Gastrocnemius medialis (tissue), 4 donors: ENCODE measurements at regions of chr18 and their contacts with region 1.

Region 1: GRCh38 chr18:3605954-3606443 is 156.0 kb downstream of the TGIF1 start:
- DNase-seq: no peak
- ATAC-seq: peak in 1 of 2 donors; percentile 12
- H3K4me3 ChIP-seq: peak overlapping the region; percentile 12 to 57 (median 47)
- H3K27ac ChIP-seq: peak overlapping the region; percentile 64 to 86 (median 82)
- H3K4me1 ChIP-seq: peaks cover 21 to 39% of the 10 kb centered on the region in 2 donors
- H3K27me3 ChIP-seq: peaks cover 0 to 31% (median 21%) of the 10 kb centered on the region in 3 donors
- CTCF ChIP-seq: no peak
- POLR2A ChIP-seq: no peak

Region 2: GRCh38 chr18:3511922-3512372 is 94.1 kb before region 1 on chr18:
- in situ Hi-C with region 1: no loop called
- intact Hi-C with region 1: no loop called
- DNase-seq: no peak
- ATAC-seq: no peak
- H3K4me3 ChIP-seq: no peak overlapping the region
- H3K27ac ChIP-seq: no peak overlapping the region
- H3K4me1 ChIP-seq: no peaks in the 10 kb centered on the region
- H3K27me3 ChIP-seq: no peaks in the 10 kb centered on the region
- CTCF ChIP-seq: no peak
- POLR2A ChIP-seq: no peak

Region 3: DNA sequence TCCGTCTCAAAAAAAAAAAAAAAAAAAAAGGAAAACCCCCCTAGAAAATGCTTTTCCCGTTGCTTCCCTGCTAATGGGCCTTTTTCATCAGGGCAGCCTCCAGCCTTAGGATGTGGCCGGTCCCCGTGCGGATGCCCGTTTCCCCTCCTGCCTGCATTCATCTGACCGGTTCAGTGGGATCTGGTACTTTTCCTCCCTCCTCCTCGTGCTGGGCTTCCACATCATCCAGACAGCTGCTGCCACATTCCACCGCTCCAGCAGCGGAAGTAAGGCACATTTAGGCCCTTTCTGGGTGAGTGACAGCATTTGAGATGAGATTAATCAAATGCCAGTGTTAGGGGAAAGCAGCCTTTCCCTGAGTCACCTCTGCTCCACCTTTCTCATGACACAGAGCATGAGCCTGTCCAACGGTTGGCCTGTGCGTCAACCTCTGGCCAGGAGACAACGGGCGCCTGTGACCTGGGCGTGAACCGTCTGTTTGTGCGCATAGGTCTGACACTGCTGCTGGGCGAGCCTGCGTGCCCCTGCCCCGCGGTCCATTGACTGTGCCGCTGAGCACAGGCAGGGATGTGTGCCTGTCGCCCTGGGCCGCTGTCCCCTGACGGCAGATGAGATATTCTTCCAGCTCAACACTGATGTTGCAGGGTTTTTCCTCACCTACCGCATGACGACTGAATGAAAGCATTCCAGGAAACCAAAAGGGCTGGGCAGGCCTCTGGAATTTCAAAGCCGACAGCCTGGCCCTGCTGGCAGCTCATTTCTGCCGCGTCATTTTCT is 18.0 kb after region 1 on chr18:
- in situ Hi-C with region 1: no loop called
- intact Hi-C with region 1: loop called (anchors 1 kb)
- DNase-seq: peak; percentile 61 to 81
- ATAC-seq: peak; percentile 75 to 80
- H3K4me3 ChIP-seq: peak overlapping the region; percentile 17 to 52 (median 22)
- H3K27ac ChIP-seq: peak overlapping the region; percentile 71 to 79 (median 74)
- H3K4me1 ChIP-seq: peaks cover 14 to 15% of the 10 kb centered on the region in 2 donors
- H3K27me3 ChIP-seq: no peaks in the 10 kb centered on the region
- CTCF ChIP-seq: no peak
- POLR2A ChIP-seq: peak; percentile 64